ENCODE measurements at regions of chr2 and their contacts with region 1.

Region 1: GRCh38 chr2:112584134-112584890 is at the start of gene CHCHD5:
- DNase-seq: peak; percentile 97
- ATAC-seq: peak; percentile 95
- total RNA-seq, gene CHCHD5: 20.8 TPM

Region 2: GRCh38 chr2:111897924-111898702 is 686.2 kb before region 1 on chr2 and contains the start of gene MERTK:
- intact Hi-C with region 1: loop called (anchors 5 kb)
- DNase-seq: peak; percentile 93
- ATAC-seq: peak; percentile 94
- total RNA-seq, gene MERTK: 6.6 TPM

Region 3: GRCh38 chr2:112121682-112122254 is 462.5 kb before region 1 on chr2:
- intact Hi-C with region 1: loop called (anchors 5 kb)
- DNase-seq: no peak
- ATAC-seq: no peak

Region 4: GRCh38 chr2:112254466-112255239 is 329.7 kb before region 1 on chr2 and contains the start of gene ZC3H8:
- intact Hi-C with region 1: loop called (anchors 10 kb)
- DNase-seq: peak; percentile 98
- ATAC-seq: peak; percentile 100
- total RNA-seq, gene ZC3H8: 10.6 TPM

Region 5: DNA sequence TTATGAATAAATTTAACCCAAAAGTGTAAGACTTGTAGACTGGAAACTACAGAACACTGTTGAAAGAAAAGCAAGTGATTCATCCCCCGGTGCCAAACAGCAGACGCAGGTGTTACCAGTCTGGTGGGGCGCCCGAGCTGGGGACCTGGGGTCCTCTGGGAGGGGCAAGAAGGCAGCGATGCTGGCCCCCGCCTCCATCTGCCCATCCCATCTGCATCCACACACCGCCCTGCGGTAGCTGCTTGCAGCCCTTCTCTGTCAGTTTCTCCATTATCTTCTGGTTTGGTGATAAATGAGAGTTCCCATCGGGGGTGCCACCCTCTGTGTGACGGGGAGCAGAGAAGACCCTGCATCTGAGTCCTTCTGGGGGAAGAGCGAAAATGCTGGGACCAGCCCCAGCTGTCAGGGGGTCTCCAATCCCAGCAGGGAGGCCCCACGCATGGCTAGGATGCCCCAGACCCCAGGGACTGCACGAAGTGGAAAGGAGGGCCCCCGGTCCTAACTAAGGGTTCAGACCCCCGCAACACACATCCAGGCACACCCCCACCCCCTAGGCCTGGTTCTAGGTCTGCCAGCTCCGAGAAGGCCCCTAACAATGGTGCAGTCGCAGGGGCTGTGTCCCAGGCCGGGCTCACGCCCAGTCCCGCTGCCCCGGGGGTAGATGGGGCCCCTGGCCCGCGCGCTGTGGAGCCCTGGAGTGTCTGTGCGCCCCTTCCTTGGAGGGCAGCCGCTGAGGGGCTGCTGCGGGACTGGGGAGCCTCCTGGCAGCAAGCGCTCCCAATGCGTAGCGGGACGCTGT is 150.2 kb before region 1 on chr2:
- intact Hi-C with region 1: no loop called
- DNase-seq: peak; percentile 33
- ATAC-seq: no peak

Region 6: DNA sequence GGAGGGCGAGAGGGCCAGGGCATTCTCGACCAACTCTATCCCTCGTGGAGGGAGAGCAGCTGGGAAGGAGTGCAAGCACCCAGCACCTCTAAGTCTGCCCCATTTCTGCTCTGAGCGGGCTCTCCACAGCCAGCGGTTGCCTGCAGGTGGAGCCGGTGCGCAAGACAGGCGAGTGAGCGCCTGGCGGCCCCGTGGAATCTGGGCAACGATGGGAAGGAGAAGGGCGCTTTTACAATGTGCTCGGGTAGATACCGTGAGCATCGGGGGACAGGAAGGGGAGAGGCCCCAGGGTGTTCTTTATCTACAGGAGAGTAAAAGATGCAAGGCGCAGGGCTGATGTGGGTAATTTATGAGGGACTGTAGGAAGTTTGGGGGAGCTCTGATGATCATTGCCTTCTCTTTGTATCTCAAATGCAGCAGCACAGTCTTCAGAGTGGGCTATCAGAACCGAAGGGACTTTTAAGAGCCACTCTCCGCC is 103.2 kb before region 1 on chr2:
- intact Hi-C with region 1: loop called (anchors 5 kb)
- DNase-seq: peak; percentile 93
- ATAC-seq: peak; percentile 92

Region 7: GRCh38 chr2:112566104-112566503 is 18.2 kb before region 1 on chr2:
- intact Hi-C with region 1: no loop called
- DNase-seq: no peak
- ATAC-seq: no peak

Region 8: GRCh38 chr2:112644155-112644932 is 60.0 kb after region 1 on chr2:
- intact Hi-C with region 1: loop called (anchors 1 kb)
- DNase-seq: no peak
- ATAC-seq: no peak

Region 9: DNA sequence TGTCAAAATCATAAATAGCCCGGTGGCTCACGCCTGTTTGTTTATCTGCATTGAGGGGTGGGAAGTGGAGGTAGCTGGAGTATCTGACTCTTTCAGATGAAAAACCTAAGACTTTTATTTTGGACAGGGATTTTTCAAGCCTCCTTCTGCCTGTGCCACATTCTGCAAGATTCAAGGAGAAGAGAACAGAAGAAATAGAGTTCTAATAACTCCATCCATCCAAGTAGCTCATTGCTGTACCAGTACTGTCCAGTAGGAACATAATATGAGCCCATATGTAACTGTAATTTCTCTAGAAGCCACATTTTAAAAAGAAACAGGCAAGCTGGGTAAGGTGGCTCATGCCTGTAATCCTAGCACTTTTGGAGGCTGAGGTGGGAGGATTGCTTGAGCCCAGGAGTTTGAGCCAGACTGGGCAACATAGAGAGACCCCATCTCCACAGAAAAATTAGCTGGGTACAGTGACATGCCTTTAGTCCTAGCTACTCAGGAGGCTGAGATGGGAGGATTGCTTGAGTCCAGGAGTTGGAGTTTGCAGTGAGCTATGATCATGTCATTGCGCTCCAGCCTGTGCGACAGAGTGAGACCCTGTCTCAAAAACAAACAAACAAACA is 101.1 kb after region 1 on chr2:
- intact Hi-C with region 1: no loop called
- DNase-seq: no peak
- ATAC-seq: no peak

Measured in Right ventricle myocardium inferior (tissue), 1 donor.